Prostate gland (tissue), 2 donors: ENCODE measurements at regions of chr19 and their contacts with region 1.

Region 1: GRCh38 chr19:40974633-40975037 is 16.4 kb upstream of the CYP2B6 start:
- DNase-seq: peak; percentile 72
- H3K4me3 ChIP-seq: no peak overlapping the region
- H3K27ac ChIP-seq: no peak overlapping the region
- H3K4me1 ChIP-seq: no peaks in the 10 kb centered on the region
- H3K27me3 ChIP-seq: no peaks in the 10 kb centered on the region
- CTCF ChIP-seq: peak; percentile 58 to 86 (median 70)
- POLR2A ChIP-seq: no peak

Region 2: GRCh38 chr19:40990972-40991381 is 16.3 kb after region 1 on chr19 and contains the start of gene CYP2B6:
- intact Hi-C with region 1: no loop called
- DNase-seq: no peak
- H3K4me3 ChIP-seq: no peak within 1 kb of the TSS
- H3K27ac ChIP-seq: no peak within 1 kb of the TSS
- H3K4me1 ChIP-seq: no peaks in the 10 kb centered on the region
- H3K27me3 ChIP-seq: no peaks in the 10 kb centered on the region
- CTCF ChIP-seq: no peak
- POLR2A ChIP-seq: no peak
- total RNA-seq, gene CYP2B6: not detected

Region 3: DNA sequence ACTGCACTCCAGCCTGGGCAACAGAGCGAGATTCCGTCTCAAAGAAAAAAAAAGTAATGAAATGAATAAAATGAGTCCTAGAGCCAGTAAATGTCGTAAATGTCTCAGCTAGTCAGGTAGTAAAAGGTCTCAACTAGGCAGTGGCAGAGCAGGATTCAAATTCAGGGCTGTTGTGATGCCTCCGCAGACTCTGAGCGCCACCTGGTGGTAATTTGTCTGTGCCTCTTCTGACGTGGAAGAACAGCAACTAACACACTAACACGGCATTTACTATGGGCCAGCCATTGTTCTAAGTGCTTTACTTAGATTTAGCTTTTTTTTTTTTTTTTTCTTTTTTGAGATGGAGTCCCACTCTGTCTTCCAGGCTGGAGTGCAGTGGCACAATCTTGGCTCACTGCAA is 169.8 kb after region 1 on chr19:
- intact Hi-C with region 1: loop called (anchors 10 kb)
- DNase-seq: peak; percentile 84
- H3K4me3 ChIP-seq: no peak overlapping the region
- H3K27ac ChIP-seq: no peak overlapping the region
- H3K4me1 ChIP-seq: no peaks in the 10 kb centered on the region
- H3K27me3 ChIP-seq: no peaks in the 10 kb centered on the region
- CTCF ChIP-seq: peak; percentile 70 to 88 (median 80)
- POLR2A ChIP-seq: no peak